OCI-LY7 (cell line): ENCODE measurements at regions of chr1 and their contacts with region 1.

Region 1: GRCh38 chr1:241611063-241611462 is 29.1 kb downstream of the CHML start:
- DNase-seq: peak; percentile 82
- H3K4me3 ChIP-seq: no peak overlapping the region
- H3K27ac ChIP-seq: no peak overlapping the region
- H3K4me1 ChIP-seq: peaks cover 8% of the 10 kb centered on the region
- CTCF ChIP-seq: peak; percentile 92

Region 2: GRCh38 chr1:241310451-241310850 is 300.6 kb before region 1 on chr1:
- CTCF ChIA-PET with region 1: no interaction called
- POLR2A ChIA-PET with region 1: no interaction called
- intact Hi-C with region 1: no loop called
- DNase-seq: no peak
- H3K4me3 ChIP-seq: no peak overlapping the region
- H3K27ac ChIP-seq: no peak overlapping the region
- H3K4me1 ChIP-seq: no peaks in the 10 kb centered on the region
- CTCF ChIP-seq: no peak

Region 3: GRCh38 chr1:241627453-241628259 is 16.6 kb after region 1 on chr1:
- CTCF ChIA-PET with region 1: interaction called, 5 read pairs
- POLR2A ChIA-PET with region 1: interaction called, 5 read pairs
- intact Hi-C with region 1: loop called (anchors 2 kb)
- DNase-seq: peak; percentile 81
- H3K4me3 ChIP-seq: peak overlapping the region; percentile 51
- H3K27ac ChIP-seq: peak overlapping the region; percentile 70
- H3K4me1 ChIP-seq: peaks cover 20% of the 10 kb centered on the region
- CTCF ChIP-seq: peak; percentile 93

Region 4: GRCh38 chr1:241834733-241835377 is 223.8 kb after region 1 on chr1:
- CTCF ChIA-PET with region 1: no interaction called
- POLR2A ChIA-PET with region 1: no interaction called
- intact Hi-C with region 1: loop called (anchors 2 kb)
- DNase-seq: peak; percentile 31
- H3K4me3 ChIP-seq: no peak overlapping the region
- H3K27ac ChIP-seq: no peak overlapping the region
- H3K4me1 ChIP-seq: peaks cover 4% of the 10 kb centered on the region
- CTCF ChIP-seq: peak; percentile 86

Region 5: GRCh38 chr1:242017584-242018233 is 406.6 kb after region 1 on chr1:
- CTCF ChIA-PET with region 1: no interaction called
- POLR2A ChIA-PET with region 1: no interaction called
- intact Hi-C with region 1: loop called (anchors 5 kb)
- DNase-seq: peak; percentile 53
- H3K4me3 ChIP-seq: no peak overlapping the region
- H3K27ac ChIP-seq: no peak overlapping the region
- H3K4me1 ChIP-seq: no peaks in the 10 kb centered on the region
- CTCF ChIP-seq: peak; percentile 80